H1 (cell line): ENCODE measurements at regions of chr5 and their contacts with region 1.

Region 1: DNA sequence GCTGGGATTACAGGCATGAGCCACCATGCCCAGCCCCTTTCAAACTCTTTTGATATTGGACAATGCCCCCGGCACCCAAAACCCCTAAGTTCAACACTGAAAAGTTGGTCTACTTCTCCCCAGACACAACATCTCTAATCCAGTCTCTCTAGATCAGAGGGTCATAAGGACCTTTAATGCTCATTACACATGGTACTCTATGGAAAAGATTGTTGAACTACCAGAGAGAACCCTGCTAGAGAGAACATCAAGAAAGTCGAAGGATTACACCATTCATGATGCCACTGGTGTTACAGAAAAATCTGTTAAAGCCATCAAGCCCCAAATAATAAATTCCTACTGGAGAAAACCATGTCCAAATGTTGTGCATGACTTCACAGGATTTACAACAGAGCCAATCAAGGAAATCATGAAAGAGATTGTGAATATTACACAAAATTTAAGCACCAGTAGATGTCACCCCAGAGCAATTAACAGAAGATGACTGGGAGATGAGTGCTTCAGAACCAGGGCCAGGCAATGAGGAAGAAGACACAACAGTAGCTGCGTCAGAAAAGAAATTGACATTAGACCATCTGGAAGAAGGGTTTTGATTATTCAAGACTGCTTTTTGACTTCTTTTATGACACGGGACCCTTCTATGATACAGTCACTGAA is 28.3 kb upstream of the NIPAL4 start:
- DNase-seq: no peak
- H3K4me3 ChIP-seq: no peak overlapping the region
- H3K27ac ChIP-seq: no peak overlapping the region
- H3K4me1 ChIP-seq: no peaks in the 10 kb centered on the region
- H3K27me3 ChIP-seq: no peaks in the 10 kb centered on the region
- CTCF ChIP-seq: peak in 2 of 3 experiments; percentile 40 to 50; a peak in 2 of 4 replicates
- EP300 ChIP-seq: no peak
- POLR2A ChIP-seq: no peak
- RAD21 ChIP-seq: peak; percentile 68 to 69

Region 2: DNA sequence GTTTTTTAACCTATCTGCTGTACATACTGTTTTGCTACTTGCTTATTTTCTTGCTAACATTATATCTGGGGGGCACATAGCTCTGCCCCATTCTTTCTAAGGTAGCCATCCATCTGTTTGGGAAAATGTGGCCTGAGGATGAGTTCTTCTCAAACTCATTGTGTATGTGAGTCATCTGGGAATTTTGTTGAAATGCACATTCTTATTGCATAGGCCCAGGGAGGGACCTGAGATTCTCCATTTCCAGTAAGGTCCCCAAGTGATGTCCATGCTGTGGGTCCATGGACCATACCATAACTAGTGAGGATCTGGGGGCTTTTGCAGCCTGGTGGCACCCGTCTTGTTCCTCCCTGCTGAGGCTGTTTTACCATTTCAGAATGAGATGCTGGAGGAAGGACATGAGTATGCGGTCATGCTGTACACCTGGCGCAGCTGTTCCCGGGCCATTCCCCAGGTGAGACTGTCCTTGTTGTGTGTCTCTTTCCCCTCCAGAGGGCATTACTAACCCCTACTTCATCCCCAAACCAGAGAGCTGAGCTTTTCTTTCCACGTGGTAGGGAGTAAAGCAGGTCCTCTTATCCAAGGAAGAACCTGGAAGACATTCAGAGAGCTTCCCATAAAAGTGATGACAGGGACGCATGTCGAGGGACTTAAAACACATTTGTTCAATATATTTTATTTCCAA is 137.1 kb before region 1 on chr5:
- CTCF ChIA-PET with region 1: no interaction called
- POLR2A ChIA-PET with region 1: no interaction called
- DNase-seq: no peak
- H3K4me3 ChIP-seq: no peak overlapping the region
- H3K27ac ChIP-seq: no peak overlapping the region
- H3K4me1 ChIP-seq: no peaks in the 10 kb centered on the region
- H3K27me3 ChIP-seq: no peaks in the 10 kb centered on the region
- CTCF ChIP-seq: peak; percentile 33 to 35 (median 33); a peak in 3 of 4 replicates
- EP300 ChIP-seq: no peak
- POLR2A ChIP-seq: no peak
- RAD21 ChIP-seq: peak in 1 of 2 experiments; percentile 32; a peak in 1 of 4 replicates

Region 3: DNA sequence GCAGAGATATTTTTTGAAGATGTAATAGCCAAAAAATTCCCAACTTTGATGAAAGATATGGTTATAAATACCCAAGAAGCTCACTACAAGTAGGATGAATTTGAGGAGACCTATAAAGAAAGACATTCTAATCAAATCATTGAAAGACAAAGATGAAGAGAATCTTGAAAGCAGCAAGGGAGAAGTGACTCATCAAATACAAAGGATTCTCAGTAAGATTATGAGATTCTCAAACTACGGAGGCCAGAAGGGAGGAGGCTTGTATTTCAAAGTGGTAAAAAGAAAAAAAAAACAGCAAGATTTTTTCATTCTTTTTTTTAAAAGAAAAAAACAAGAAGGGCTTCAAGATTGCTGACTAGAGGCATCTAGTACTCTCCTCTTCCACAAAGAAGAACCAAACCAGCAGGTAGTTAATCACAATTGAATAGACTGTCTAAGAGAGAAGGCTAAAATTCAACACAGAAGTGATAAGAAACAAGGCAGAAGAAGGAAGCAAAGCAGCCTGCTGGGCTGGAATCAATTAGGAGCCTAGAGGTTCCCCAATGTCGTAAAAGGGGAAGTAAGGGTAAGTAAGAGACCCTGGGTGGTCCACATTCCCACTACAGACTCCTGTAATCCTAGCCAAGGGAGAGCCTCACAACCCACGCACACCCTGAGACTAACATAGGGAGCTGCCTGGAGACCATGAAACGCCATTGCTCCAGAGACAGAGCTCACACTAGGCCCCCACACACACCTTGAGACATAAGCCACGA is 30.8 kb before region 1 on chr5:
- CTCF ChIA-PET with region 1: interaction called, 10 read pairs
- POLR2A ChIA-PET with region 1: no interaction called
- DNase-seq: no peak
- H3K4me3 ChIP-seq: no peak overlapping the region
- H3K27ac ChIP-seq: no peak overlapping the region
- H3K4me1 ChIP-seq: no peaks in the 10 kb centered on the region
- H3K27me3 ChIP-seq: no peaks in the 10 kb centered on the region
- CTCF ChIP-seq: no peak
- EP300 ChIP-seq: no peak
- POLR2A ChIP-seq: no peak
- RAD21 ChIP-seq: no peak

Region 4: GRCh38 chr5:157464519-157465171 is 33.0 kb after region 1 on chr5:
- CTCF ChIA-PET with region 1: interaction called, 12 read pairs
- POLR2A ChIA-PET with region 1: no interaction called
- DNase-seq: no peak
- H3K4me3 ChIP-seq: no peak overlapping the region
- H3K27ac ChIP-seq: no peak overlapping the region
- H3K4me1 ChIP-seq: peaks cover 0 to 4% (median under 1%) of the 10 kb centered on the region in 4 experiments; a peak in 3 of 7 replicates
- H3K27me3 ChIP-seq: peaks cover 9 to 25% (median 17%) of the 10 kb centered on the region in 4 experiments; a peak in 6 of 7 replicates
- CTCF ChIP-seq: no peak
- EP300 ChIP-seq: no peak
- POLR2A ChIP-seq: no peak
- RAD21 ChIP-seq: no peak